Transverse colon (tissue), 4 donors: ENCODE measurements at regions of chr22 and their contacts with region 1.

Region 1: DNA sequence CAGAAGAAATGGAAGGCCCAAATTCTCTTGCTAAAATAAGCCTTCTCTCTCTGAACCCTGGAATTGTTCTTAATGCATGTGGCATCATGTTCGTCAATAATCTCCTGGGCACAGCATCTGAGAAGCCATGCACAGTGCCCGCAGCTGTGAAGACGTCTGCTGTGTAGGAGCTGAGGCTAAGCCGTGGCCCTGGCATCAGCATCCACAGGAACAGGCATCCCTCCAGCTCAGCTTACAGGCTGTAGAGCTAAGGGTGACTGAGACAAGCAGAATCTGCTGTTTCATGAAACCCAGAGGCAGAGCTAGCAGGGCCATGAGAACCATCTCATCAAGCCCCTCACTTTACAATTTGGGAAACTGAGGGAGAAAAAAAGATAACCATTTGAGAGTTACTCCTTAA is 60.6 kb downstream of the SEZ6L start:
- DNase-seq: no peak
- H3K4me3 ChIP-seq: no peak overlapping the region
- H3K27ac ChIP-seq: no peak overlapping the region
- H3K4me1 ChIP-seq: no peaks in the 10 kb centered on the region
- H3K27me3 ChIP-seq: no peaks in the 10 kb centered on the region
- CTCF ChIP-seq: no peak
- EP300 ChIP-seq: no peak
- POLR2A ChIP-seq: no peak

Region 2: DNA sequence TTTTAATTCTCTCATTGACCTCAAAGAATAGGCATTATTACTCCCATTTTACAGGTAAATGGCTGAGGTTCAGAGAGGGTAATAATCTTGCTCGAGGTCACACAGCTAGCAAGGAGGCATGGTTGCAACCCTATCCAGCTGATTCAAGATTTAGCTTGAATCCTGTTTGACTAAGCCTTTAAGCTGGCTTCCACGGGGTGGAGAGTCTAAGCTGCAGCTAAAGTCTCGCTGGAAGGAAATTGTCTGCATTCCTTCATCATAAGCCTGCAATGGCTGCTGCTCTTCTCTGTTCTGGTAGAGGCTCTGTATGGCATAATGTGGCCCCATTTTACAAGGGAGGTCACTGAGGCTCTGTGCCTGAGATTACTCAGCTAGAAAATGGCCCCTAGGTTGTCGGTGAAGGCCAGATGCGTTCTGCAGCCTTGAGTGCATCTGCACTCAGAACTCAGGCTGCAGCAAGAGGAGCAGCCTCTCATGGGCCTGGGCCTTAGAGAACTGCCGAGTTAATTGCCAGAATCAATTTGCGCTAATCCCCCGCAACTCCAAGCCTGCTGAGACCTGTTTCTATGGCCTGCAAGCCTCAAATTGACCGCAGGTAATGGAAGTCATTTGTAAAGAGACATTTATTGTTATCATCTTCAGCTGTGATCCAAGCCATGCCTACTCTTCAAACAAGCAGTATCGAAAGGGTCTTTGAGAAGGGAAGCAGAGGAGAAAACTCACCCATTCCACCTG is 104.8 kb before region 1 on chr22:
- in situ Hi-C with region 1: no loop called
- intact Hi-C with region 1: loop called (anchors 5 kb)
- DNase-seq: no peak
- H3K4me3 ChIP-seq: no peak overlapping the region
- H3K27ac ChIP-seq: no peak overlapping the region
- H3K4me1 ChIP-seq: no peaks in the 10 kb centered on the region
- H3K27me3 ChIP-seq: no peaks in the 10 kb centered on the region
- CTCF ChIP-seq: no peak
- EP300 ChIP-seq: no peak
- POLR2A ChIP-seq: no peak